Adrenal gland (tissue), 19 donors: ENCODE measurements at regions of chr11 and their contacts with region 1.

Region 1: GRCh38 chr11:14907411-14908213 is 15.6 kb upstream of the CYP2R1 start:
- DNase-seq: peak; percentile 62 to 89 (median 72)
- H3K4me3 ChIP-seq: no peak overlapping the region
- H3K27ac ChIP-seq: no peak overlapping the region
- H3K4me1 ChIP-seq: peaks cover 0 to 11% of the 10 kb centered on the region in 2 donors
- H3K27me3 ChIP-seq: peaks cover 5% of the 10 kb centered on the region
- CTCF ChIP-seq: peak; percentile 51 to 75 (median 62)
- POLR2A ChIP-seq: no peak

Region 2: GRCh38 chr11:14537134-14537599 is 370.4 kb before region 1 on chr11:
- intact Hi-C with region 1: loop called in 1 of 2 experiments (anchors 5 kb)
- DNase-seq: peak in 3 of 7 donors; percentile 38 to 55 (median 40)
- H3K4me3 ChIP-seq: no peak overlapping the region
- H3K27ac ChIP-seq: no peak overlapping the region
- H3K4me1 ChIP-seq: no peaks in the 10 kb centered on the region
- H3K27me3 ChIP-seq: no peaks in the 10 kb centered on the region
- CTCF ChIP-seq: peak; percentile 51 to 77 (median 66)
- POLR2A ChIP-seq: no peak

Region 3: GRCh38 chr11:14789879-14790484 is 117.6 kb before region 1 on chr11:
- intact Hi-C with region 1: loop called (anchors 5 to 10 kb)
- DNase-seq: no peak
- H3K4me3 ChIP-seq: no peak overlapping the region
- H3K27ac ChIP-seq: no peak overlapping the region
- H3K4me1 ChIP-seq: no peaks in the 10 kb centered on the region
- H3K27me3 ChIP-seq: no peaks in the 10 kb centered on the region
- CTCF ChIP-seq: peak in 4 of 6 experiments; percentile 27 to 59 (median 54)
- POLR2A ChIP-seq: no peak